Activated T-helper 1 cell treated with anti-CD3 and anti-CD28 coated beads, Interleukin-12 subunit alpha, Interleukin-12 subunit beta, Interleukin-2, Interleukin-4 antibody, amounts not matched to agents 30 ng/mL and 10 ng/mL and 1 ng/mL, durations not matched to agents 14 hours and 24 hours and 36 hours (primary cell): ENCODE measurements at regions of chr3 and their contacts with region 1.

Region 1: DNA sequence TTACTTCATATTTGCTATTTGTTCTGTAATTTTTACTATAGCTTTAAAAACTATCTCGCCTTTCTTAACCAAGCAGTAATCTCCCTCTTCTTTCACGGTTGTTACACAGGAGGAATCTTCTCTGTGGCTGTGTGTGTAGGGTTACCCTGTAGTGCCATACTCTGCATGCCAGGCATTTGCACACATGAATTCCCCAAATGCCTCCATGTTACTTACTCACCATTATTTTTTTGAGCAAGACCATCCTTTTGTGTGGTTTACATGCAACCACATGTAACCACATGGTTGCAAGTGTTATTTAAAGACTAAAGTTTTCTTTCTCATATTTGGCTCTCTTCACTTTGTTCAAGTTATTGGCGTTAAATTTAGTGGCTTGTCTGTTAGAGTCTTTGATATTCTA is 45.5 kb downstream of the HPS3 start:
- DNase-seq: peak; percentile 2
- H3K4me3 Mint-ChIP-seq: no peak overlapping the region
- H3K27ac Mint-ChIP-seq: no peak overlapping the region
- H3K4me1 Mint-ChIP-seq: peaks cover 8% of the 10 kb centered on the region
- H3K27me3 Mint-ChIP-seq: no peaks in the 10 kb centered on the region

Region 2: DNA sequence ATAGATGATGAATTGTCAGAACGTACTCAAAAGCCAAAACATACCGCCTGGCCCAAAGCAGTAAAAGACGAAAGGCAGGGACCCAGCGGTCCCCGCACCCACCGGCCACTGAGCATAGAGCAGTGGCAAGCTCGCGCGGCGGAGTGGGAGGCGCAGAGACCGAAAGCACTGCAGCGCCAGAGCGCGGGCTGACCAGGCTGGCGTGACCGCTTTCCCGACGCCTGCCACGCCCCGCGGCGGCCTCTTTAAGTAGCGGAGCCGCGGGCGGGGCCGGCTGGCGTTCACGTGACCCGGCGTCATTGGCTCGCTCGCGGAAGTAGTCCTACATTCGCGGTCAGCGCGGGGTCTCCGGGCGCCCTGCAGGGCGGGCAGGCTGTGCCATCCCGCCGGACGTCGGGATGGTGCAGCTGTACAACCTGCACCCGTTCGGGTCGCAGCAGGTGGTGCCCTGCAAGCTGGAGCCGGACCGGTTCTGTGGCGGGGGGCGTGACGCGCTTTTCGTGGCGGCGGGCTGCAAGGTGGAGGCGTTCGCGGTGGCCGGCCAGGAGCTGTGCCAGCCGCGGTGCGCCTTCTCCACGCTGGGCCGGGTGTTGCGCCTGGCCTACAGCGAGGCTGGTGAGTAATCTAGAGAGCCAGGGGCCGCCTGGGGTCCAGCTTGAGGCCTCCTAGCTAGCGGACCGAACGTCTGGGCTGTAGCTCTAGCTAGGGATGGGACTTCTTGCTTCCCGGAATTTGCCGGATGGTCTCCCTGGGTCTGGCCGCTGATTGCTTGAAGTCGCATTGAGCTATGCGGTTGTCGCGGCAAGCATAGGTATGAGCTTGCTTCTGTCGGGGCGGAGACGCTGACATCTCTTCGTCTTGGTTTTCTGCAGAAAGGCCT is 45.3 kb before region 1 on chr3 and contains the start of gene HPS3:
- intact Hi-C with region 1: loop called (anchors 1 kb)
- DNase-seq: peak; percentile 84
- H3K4me3 Mint-ChIP-seq: peak within 1 kb of the TSS; percentile 92
- H3K27ac Mint-ChIP-seq: peak within 1 kb of the TSS; percentile 88
- H3K4me1 Mint-ChIP-seq: peaks cover 39% of the 10 kb centered on the region
- H3K27me3 Mint-ChIP-seq: peaks cover 33% of the 10 kb centered on the region
- total RNA-seq, gene HPS3: 15.8 and 17.3 TPM in 2 replicates

Region 3: GRCh38 chr3:149152420-149152819 is 22.5 kb before region 1 on chr3:
- intact Hi-C with region 1: loop called (anchors 1 kb)
- DNase-seq: peak; percentile 2
- H3K4me3 Mint-ChIP-seq: no peak overlapping the region
- H3K27ac Mint-ChIP-seq: no peak overlapping the region
- H3K4me1 Mint-ChIP-seq: peaks cover 19% of the 10 kb centered on the region
- H3K27me3 Mint-ChIP-seq: no peaks in the 10 kb centered on the region

Region 4: DNA sequence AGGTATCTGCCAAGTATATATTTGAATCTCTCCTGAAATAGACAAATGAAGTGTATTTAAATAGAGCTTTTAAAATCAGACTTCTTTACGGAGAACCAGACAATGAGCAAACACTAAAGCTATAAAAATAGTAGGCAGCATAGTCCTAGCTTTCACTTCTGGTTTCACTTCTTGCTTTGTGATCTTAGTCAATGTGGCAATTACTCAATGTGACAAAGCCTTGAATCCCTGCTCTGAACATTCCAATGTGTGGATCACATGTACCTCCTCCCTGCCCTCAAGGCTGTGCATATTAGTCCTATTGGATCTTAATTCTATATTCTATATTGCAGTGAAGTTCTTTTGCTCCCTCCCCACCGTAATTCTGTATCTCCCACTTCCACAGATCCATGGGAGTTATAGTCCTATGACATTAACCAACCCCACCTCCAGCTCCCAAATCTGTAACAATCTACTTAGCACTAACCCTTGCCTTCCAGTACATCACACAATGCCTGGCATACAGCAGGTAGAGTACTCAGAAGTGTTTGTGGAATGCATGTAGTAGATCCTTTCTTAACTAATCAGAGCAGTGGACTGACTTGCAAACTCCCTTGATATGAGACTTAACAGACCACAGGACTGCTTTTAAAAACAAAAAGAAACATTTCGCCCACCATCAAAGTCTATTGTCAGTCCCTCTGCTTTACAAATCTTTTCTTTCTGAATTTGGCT is 71.0 kb after region 1 on chr3:
- intact Hi-C with region 1: loop called (anchors 1 kb)
- DNase-seq: no peak
- H3K4me3 Mint-ChIP-seq: peak overlapping the region; percentile 16
- H3K27ac Mint-ChIP-seq: peak overlapping the region; percentile 51
- H3K4me1 Mint-ChIP-seq: peaks cover 37% of the 10 kb centered on the region
- H3K27me3 Mint-ChIP-seq: peaks cover 4% of the 10 kb centered on the region